Endothelial cell of umbilical vein (primary cell): ENCODE measurements at regions of chr19 and their contacts with region 1.

Region 1: DNA sequence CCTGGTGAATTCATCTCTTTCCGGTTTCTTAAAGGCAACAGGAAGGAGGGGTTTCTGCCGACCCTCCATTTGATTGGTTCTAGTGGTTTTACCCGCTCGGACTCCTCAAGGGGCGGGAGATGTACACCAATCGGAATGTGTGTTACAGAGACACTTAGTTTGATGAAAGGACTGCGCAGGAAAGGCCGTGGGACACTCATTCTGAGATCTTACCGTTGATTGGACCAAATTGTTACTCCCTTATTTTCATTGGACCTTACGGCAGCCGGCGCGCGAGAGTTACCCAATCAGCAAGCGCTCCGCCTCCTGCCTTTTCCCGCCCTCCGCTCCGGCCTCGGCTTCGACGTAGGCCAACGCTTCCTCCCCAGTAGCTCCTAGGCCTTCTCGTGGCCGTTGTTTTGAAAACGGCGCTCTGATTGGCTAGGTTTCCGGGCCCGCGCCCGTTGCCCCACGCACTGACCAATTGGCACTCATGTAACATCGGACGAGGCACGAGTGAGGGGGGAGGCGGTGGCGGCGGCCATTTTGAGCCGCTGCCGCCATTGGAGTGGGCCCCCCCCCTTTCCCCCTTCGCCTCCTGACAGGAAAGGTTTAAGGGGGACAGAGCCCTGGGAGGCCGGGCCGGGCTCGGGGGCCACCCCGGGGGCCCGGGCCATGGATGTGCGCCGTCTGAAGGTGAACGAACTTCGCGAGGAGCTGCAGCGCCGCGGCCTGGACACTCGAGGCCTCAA is at the start of gene HNRNPUL1:
- DNase-seq: peak; percentile 100
- H3K4me3 ChIP-seq: peak within 1 kb of the TSS; percentile 85 to 91 (median 89)
- H3K27ac ChIP-seq: peak within 1 kb of the TSS; percentile 90
- H3K4me1 ChIP-seq: peaks cover 18% of the 10 kb centered on the region
- H3K27me3 ChIP-seq: no peaks in the 10 kb centered on the region
- CTCF ChIP-seq: peak; percentile 5 to 46
- POLR2A ChIP-seq: peak; percentile 10
- total RNA-seq, gene HNRNPUL1: 261 TPM in 2 replicates

Region 2: GRCh38 chr19:41123716-41124294 is 140.2 kb before region 1 on chr19:
- CTCF ChIA-PET with region 1: interaction called, 3 read pairs
- POLR2A ChIA-PET with region 1: no interaction called
- dilution Hi-C with region 1: no loop called
- intact Hi-C with region 1: loop called (anchors 1 kb)
- DNase-seq: no peak
- H3K4me3 ChIP-seq: no peak overlapping the region
- H3K27ac ChIP-seq: no peak overlapping the region
- H3K4me1 ChIP-seq: no peaks in the 10 kb centered on the region
- H3K27me3 ChIP-seq: peaks cover 0 to under 1% of the 10 kb centered on the region in 2 experiments
- CTCF ChIP-seq: no peak
- POLR2A ChIP-seq: no peak

Region 3: GRCh38 chr19:41206926-41207750 is 56.9 kb before region 1 on chr19:
- CTCF ChIA-PET with region 1: interaction called, 244 read pairs
- POLR2A ChIA-PET with region 1: interaction called, 9 read pairs
- dilution Hi-C with region 1: no loop called
- intact Hi-C with region 1: loop called (anchors 1 kb)
- DNase-seq: no peak
- H3K4me3 ChIP-seq: no peak overlapping the region
- H3K27ac ChIP-seq: no peak overlapping the region
- H3K4me1 ChIP-seq: no peaks in the 10 kb centered on the region
- H3K27me3 ChIP-seq: no peaks in the 10 kb centered on the region
- CTCF ChIP-seq: no peak
- POLR2A ChIP-seq: no peak

Region 4: DNA sequence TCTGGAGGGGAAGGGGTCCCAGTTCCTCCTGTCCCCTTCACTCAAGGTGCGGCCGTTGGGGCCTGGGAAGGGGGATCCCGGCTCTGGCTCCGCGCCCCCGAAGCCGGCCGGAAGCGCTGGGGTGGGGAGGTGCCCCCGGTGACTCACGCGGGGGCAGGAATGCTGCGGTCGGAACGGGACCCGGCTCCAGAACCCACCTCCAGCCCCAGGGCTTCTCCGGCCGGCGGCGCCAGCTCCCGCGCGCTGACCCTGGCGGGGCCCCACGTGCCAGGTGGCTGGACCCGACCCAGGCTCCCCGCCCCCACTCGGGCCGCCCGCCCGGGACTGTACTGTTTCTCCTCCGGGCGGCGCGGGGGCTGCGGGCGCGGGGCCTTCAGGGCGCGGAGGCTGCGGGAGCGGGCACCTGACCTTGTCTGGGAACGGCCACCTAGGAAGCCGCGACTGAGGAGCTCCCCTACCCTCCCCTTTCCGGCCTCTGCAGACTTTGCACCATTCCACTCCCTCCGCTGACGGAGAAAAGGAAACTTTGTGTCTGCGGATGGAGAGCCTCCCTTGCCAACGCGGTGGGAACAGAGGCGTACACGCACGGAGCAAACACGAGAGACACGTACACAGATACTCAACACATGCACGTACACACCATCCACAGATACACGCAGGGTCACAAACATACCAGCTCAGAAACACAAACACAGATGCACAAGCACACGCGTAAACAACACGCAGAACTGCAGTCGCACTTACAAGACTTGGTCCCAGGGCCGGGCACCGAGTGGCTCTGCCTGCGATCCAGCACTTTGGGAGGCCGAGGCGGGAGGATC is 37.8 kb before region 1 on chr19:
- CTCF ChIA-PET with region 1: interaction called, 29 read pairs
- POLR2A ChIA-PET with region 1: interaction called, 4 read pairs
- dilution Hi-C with region 1: no loop called
- intact Hi-C with region 1: loop called (anchors 1 kb)
- DNase-seq: peak; percentile 59
- H3K4me3 ChIP-seq: peak overlapping the region in 2 of 3 experiments; percentile 32 to 50
- H3K27ac ChIP-seq: peak overlapping the region; percentile 76
- H3K4me1 ChIP-seq: peaks cover 44% of the 10 kb centered on the region
- H3K27me3 ChIP-seq: no peaks in the 10 kb centered on the region
- CTCF ChIP-seq: no peak
- POLR2A ChIP-seq: no peak

Region 5: DNA sequence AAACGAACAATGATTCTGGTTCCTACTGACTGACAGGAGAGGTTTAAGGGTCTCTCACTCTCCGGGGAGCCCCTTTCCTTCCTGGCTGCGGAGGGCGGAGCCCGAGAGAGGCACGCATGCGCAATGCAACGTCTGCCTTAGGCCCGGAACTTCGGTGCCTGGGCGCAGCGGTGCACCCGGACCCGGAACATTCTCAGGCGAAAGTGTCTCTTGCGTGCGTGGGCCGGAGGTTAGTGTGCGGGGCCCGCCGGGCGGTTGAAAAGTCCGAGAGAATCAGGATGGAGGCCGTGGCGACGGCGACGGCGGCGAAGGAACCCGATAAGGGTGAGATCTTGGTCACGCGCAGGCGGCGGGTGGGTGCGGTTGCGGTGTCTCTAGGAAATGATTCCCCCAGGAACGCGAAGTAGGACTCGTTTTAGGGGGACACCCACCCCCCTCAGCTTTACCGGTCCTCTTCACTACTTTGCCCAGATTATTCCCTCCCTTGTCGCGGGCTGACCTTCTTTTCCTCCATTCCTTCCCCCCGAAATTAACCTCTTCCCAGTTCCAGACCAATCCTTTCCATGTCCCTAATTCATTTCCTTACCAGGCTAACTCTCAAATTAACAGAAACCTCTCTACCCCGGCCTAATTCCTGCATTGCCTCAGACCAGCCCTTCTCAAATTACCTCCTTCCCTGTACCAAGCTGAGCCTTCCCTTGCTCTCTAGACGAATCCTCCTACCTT is 46.2 kb after region 1 on chr19 and contains the start of gene CCDC97:
- CTCF ChIA-PET with region 1: interaction called, 10 read pairs
- POLR2A ChIA-PET with region 1: no interaction called
- dilution Hi-C with region 1: no loop called
- intact Hi-C with region 1: loop called (anchors 1 kb)
- DNase-seq: peak; percentile 91
- H3K4me3 ChIP-seq: peak within 1 kb of the TSS; percentile 71 to 97 (median 81)
- H3K27ac ChIP-seq: peak within 1 kb of the TSS; percentile 57
- H3K4me1 ChIP-seq: peaks cover 42% of the 10 kb centered on the region
- H3K27me3 ChIP-seq: no peaks in the 10 kb centered on the region
- CTCF ChIP-seq: no peak
- POLR2A ChIP-seq: peak; percentile 98
- total RNA-seq, gene CCDC97: 24.2 and 27.2 TPM in 2 replicates

Region 6: DNA sequence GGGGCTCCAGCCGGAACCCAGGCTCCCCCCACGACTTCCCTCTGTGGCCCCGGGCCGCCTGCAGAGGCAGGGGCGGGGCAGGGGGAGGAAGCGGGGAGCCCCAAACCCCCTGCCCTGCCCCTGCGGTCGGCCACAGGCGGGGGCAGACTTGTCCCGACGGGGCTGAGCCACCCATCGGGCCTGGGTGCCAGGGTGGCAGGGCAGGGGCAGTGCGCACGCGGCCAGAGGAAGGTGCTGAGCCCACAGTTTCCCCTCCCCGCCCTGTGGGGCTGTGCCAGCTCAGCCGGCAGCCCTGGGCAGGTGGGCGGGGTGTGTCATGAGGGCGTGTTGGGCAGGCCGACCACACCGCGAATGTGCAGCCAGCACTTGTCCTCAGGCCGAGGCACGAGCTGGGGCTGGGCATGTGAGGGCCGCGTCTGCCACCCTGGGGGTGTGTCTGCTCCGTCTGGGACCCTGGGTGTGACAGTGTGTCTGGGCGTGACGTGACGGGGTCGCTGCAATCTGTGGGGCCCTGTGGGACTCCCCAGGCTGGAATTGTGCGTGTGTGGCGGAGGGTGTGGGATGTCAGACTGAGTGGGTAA is 63.7 kb after region 1 on chr19:
- CTCF ChIA-PET with region 1: no interaction called
- POLR2A ChIA-PET with region 1: no interaction called
- dilution Hi-C with region 1: no loop called
- intact Hi-C with region 1: no loop called
- DNase-seq: peak; percentile 88
- H3K4me3 ChIP-seq: peak overlapping the region in 1 of 3 experiments; percentile 1
- H3K27ac ChIP-seq: peak overlapping the region; percentile 100
- H3K4me1 ChIP-seq: peaks cover 61% of the 10 kb centered on the region
- H3K27me3 ChIP-seq: no peaks in the 10 kb centered on the region
- CTCF ChIP-seq: no peak
- POLR2A ChIP-seq: no peak

Region 7: DNA sequence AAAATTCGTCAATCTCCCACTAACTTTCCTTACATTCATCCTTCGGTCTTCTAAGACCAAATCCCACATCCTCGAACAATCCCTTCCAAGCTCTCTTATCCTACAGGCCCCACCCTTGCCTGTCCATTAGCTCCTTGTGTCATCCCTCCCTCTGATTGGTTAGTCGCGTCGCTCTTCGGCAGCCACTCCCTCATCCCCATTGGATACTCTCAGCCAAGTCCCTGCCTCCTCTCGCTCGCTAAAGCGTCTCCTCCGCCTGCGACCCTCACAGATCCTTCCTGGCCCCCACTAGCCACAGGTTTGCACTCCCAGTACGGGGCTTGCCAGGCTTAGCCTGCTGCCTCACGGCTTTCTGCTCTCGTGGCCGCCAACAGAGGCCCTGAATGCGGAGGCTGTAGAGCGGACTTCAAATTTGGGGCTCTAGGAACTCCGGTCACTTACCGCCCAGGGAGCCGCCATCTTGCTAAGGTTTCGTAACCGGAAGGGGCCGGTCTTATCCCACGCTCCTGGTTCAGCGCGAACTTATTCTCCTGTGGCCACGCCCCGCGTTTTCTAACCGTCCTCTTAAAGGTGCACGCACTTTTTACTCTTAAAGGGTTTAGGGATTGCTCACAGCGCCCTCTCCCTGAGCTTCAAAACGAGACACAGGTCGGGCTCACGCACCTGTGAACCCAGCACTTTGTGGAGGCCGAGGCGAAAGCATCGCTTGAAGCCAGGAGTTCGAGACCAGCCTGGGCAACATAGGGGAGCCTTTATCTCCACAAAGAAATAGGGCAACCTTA is 175.6 kb after region 1 on chr19 and contains the start of gene DMAC2:
- CTCF ChIA-PET with region 1: no interaction called
- POLR2A ChIA-PET with region 1: no interaction called
- dilution Hi-C with region 1: no loop called
- intact Hi-C with region 1: loop called (anchors 1 kb)
- DNase-seq: peak; percentile 98
- H3K4me3 ChIP-seq: peak within 1 kb of the TSS; percentile 66 to 87 (median 76)
- H3K27ac ChIP-seq: peak within 1 kb of the TSS; percentile 89
- H3K4me1 ChIP-seq: peaks cover 6% of the 10 kb centered on the region
- H3K27me3 ChIP-seq: peaks cover 0 to 2% of the 10 kb centered on the region in 2 experiments
- CTCF ChIP-seq: peak; percentile 37 to 52
- POLR2A ChIP-seq: peak; percentile 79
- total RNA-seq, gene DMAC2: 63.2 and 65.4 TPM in 2 replicates